ENCODE measurements at regions of chr4 and their contacts with region 1.

Region 1: DNA sequence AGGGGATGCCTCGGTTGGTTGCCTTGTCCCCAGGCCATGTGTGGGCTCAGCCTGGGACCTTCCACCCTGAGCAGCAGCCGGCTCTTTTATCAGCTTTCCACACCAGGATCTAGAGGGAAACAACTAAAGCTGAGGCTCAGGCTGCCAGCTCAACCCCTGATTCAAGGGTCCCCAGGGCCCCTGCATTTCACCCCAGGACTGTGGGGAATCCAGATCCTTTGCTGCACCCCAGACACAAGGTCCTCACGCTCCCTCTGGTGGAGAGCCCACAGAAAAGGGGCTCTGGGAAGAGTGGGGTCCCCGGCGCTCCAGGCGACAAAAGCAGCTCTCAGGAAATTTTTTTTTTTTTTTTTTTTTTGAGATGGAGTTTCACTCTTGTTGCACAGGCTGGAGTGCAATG is 64.3 kb downstream of the ZFYVE28 start:
- DNase-seq: peak; percentile 39

Region 2: GRCh38 chr4:2262143-2262943 is 91.8 kb before region 1 on chr4:
- intact Hi-C with region 1: loop called (anchors 5 kb)
- DNase-seq: peak; percentile 100

Region 3: DNA sequence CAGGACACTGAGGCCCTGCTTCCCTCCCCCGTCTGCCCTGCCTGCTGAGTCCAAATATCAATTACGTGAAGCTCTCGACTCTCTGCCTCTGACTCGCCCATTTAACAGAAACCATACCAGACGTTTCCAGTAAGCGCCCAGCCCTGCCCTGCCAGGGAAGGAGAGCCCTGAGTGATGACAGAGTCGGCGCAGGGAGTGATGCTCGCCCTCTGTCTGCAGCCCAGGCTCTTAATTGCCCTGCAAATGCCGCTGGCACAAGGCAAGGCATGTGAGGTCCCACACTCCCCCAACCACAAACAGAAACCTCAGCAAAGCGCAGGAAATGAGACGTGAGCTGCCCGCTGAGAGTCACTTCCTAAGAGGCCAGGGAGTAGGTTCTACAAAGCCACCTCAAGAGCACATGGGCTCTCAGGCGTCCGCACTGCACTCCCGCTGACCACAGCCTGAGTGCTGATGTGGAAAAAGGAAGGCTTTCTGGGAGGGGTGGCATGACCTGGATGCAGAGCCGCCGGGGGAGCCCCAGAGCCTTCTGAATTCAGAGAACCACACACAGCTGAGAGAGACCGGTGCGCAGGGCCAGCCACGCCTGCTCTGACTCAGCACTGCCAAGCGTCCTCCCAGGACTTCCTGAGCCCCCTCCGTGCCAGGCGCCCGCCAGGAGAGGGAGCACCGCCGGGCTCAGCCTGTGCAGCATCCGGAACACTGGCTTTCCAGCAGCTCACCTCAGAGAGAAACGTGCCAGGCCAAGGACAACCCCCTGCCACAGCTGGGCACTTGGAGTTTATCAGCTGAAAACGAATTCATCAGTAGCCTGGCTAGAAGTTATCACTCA is 59.0 kb after region 1 on chr4:
- intact Hi-C with region 1: loop called (anchors 5 kb)
- DNase-seq: peak; percentile 89